GM10248 (cell line): ENCODE measurements at regions of chr5 and their contacts with region 1.

Region 1: DNA sequence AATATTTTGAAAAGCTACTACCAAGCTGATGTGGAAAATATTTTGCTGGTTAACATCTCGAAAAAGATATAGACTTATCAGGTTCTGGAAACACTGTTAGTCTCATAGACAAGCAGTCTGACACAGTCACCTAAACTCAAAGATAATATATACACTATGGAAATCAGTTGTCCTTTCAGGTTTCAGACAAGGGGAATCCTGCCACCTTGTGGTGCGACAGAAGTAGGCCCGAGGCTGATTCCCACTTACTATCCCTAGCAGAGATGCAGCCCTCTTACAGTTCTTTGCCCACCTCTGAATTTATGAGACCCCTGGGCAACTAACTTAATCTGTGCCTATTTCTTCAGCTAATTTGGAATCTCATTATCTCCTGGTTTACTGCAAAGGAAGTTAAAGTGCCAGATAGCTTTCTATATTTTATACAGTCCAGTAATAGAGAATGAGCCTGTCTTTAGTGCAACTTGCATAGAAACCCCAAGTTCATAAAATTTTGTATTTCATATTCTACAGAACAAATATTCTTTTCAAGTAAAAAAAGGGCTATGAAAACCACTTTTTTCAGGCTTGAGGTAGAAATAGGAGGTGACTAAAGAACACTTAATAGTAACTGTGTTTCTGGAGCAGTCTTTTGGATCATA is 16.9 kb downstream of the RAD1 start:
- DNase-seq: peak; percentile 56
- CTCF ChIP-seq: peak; percentile 78

Region 2: GRCh38 chr5:34474573-34475021 is 423.8 kb before region 1 on chr5:
- CTCF ChIA-PET with region 1: interaction called, 86 read pairs
- POLR2A ChIA-PET with region 1: no interaction called
- DNase-seq: peak; percentile 58
- CTCF ChIP-seq: peak; percentile 91

Region 3: GRCh38 chr5:34522599-34523386 is 375.6 kb before region 1 on chr5:
- CTCF ChIA-PET with region 1: interaction called, 107 read pairs
- POLR2A ChIA-PET with region 1: no interaction called
- DNase-seq: peak; percentile 72
- CTCF ChIP-seq: peak; percentile 69

Region 4: GRCh38 chr5:34866989-34867471 is 31.3 kb before region 1 on chr5:
- CTCF ChIA-PET with region 1: interaction called, 15 read pairs
- POLR2A ChIA-PET with region 1: no interaction called
- DNase-seq: no peak
- CTCF ChIP-seq: no peak

Region 5: DNA sequence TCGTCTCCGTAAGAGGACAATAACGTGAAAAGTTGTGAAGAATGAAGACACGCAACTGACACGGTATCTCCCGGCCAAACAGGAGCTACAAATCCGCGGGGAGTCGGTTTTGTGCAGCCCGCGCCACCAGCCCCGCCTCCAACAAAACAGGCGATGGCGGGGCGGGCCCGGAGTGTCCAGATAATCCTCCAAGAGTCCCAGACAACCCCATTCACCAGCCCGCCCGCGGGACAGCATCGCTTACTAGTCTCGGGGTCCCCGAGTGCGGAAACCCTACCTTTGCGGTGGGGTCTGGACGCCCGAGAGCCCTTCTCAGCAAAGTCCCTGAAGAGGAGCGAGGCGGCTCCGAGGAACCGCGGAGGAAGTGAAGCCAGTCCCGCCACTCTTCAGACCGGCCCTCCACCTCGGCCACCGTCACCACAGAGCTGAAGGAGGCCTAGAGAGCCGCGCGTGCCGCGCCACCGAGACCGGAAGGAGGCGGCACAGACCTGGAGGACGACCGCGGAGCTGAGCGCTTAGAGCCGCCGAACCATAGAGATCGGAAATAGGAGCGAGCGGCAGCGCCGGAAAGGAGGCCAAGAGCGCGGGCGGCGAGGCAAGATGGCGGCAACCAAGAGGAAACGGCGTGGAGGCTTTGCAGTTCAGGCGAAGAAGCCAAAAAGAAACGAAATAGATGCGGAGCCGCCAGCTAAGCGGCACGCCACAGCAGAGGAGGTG is 16.9 kb after region 1 on chr5 and contains the starts of genes BRIX1 and RAD1:
- CTCF ChIA-PET with region 1: interaction called, 31 read pairs
- POLR2A ChIA-PET with region 1: interaction called, 3 read pairs
- DNase-seq: peak; percentile 92
- CTCF ChIP-seq: no peak

Region 6: DNA sequence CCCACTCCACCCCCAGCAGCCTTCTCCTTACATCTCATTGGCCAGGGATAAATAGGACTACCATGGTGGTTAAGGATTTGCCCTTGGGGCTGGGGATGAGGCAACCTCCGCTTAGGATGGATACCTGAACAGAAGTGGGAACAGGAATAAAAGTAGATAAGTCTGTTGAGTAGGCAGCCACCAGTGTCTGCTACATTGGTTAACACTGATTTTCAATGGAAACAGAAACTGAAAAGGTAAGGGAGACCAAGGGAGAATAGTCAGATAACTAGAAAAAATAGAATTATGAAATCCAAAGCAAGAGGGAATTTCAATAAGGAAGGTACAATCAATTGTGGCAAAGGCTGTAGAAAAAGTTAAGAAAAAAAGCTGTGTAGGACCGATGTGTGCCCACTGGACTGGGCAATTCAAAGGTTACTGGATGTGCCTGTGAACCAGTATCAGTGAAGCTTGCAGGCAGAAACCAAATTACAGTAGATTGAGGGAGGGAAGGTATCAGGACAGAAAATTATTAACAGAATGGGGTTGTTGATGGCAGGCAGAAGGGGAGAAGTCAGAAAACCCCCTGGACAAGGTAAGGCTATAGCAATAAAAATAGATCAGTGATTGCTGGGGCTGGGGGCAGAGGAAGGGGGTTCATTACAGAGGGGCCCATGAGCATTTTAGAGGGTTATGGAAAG is 79.7 kb after region 1 on chr5:
- CTCF ChIA-PET with region 1: no interaction called
- POLR2A ChIA-PET with region 1: no interaction called
- DNase-seq: peak; percentile 29
- CTCF ChIP-seq: no peak

Region 7: GRCh38 chr5:35830587-35830986 is 932.2 kb after region 1 on chr5:
- CTCF ChIA-PET with region 1: no interaction called
- POLR2A ChIA-PET with region 1: no interaction called
- DNase-seq: no peak
- CTCF ChIP-seq: no peak